ENCODE measurements at regions of chr10 and their contacts with region 1.

Region 1: GRCh38 chr10:45008524-45009161 is 7.9 kb downstream of the ZNF22 start:
- DNase-seq: peak; percentile 88
- ATAC-seq: peak; percentile 81
- H3K4me3 ChIP-seq: no peak overlapping the region
- H3K27ac ChIP-seq: no peak overlapping the region
- H3K4me1 ChIP-seq: peaks cover 44% of the 10 kb centered on the region
- H3K27me3 ChIP-seq: no peaks in the 10 kb centered on the region
- CTCF ChIP-seq: peak; percentile 87
- EP300 ChIP-seq: no peak
- POLR2A ChIP-seq: no peak
- RAD21 ChIP-seq: peak; percentile 83

Region 2: DNA sequence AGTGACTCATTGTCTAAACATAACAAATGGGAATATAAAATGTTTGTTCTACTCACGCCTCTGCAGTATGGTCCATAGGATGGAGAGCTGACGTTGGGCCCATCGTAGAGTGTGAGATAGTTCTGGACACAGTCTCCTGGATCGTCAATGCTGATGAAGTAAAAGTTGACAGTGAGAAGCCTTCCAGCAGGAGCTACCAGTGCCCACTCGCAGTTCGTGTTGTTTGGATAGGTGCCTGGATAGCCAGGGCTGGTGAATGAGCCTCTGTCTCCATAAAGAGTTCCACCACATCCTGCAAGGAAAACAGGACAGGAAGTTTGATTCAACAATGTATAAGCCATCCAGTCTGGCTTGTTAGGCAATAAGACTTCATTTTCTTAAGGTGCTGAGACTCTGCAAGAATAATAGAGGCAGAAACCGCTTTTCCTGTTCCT is 227.2 kb after region 1 on chr10:
- CTCF ChIA-PET with region 1: no interaction called
- POLR2A ChIA-PET with region 1: no interaction called
- in situ Hi-C with region 1: loop called (anchors 25 kb)
- intact Hi-C with region 1: loop called (anchors 2 kb)
- DNase-seq: no peak
- ATAC-seq: peak; percentile 63
- H3K4me3 ChIP-seq: no peak overlapping the region
- H3K27ac ChIP-seq: no peak overlapping the region
- H3K4me1 ChIP-seq: peaks cover 7% of the 10 kb centered on the region; the same call in 1 of the 2 replicates
- H3K27me3 ChIP-seq: peaks cover 0 to 15% of the 10 kb centered on the region in 2 experiments; a peak in 3 of 5 replicates
- CTCF ChIP-seq: no peak
- EP300 ChIP-seq: no peak
- POLR2A ChIP-seq: no peak
- RAD21 ChIP-seq: no peak

Region 3: DNA sequence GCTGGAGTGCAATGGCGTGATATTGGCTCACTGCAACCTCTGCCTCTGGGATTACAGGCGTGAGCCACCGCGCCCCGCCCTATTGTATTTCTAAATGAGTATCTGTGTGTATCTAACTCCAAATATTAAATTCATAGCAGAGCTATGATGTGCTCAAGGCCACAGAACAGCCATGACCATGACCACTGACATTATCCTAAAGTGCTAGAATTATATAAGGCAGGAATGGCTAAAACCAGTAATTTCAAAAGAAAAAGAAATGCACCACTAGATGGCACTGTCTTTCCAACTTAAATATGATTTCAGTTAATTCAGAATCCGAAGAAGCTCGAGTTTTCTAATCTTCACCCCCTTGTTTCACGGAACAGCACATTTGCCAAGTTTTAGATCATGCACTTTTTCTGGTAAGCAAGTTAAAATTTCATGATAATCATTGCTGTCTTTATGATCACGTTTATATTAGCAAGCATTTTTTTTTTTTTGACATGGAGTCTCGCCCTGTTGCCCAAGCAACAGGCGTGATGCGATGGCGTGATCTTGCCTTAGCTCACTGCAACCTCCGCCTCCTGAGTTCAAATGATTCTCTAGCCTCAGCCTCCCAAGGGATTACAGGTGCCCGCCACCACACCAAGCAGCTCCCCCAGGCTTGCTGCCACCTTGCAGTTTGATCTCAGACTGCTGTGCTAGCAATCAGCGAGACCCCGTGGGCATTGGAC is 241.5 kb after region 1 on chr10:
- CTCF ChIA-PET with region 1: no interaction called
- POLR2A ChIA-PET with region 1: no interaction called
- in situ Hi-C with region 1: loop called (anchors 25 kb)
- intact Hi-C with region 1: no loop called
- DNase-seq: peak; percentile 53
- ATAC-seq: peak; percentile 35; the same call in 2 of the 3 replicates
- H3K4me3 ChIP-seq: no peak overlapping the region
- H3K27ac ChIP-seq: no peak overlapping the region
- H3K4me1 ChIP-seq: peaks cover 8% of the 10 kb centered on the region; the same call in 1 of the 2 replicates
- H3K27me3 ChIP-seq: no peaks in the 10 kb centered on the region
- CTCF ChIP-seq: peak; percentile 62
- EP300 ChIP-seq: no peak
- POLR2A ChIP-seq: no peak
- RAD21 ChIP-seq: no peak

Region 4: DNA sequence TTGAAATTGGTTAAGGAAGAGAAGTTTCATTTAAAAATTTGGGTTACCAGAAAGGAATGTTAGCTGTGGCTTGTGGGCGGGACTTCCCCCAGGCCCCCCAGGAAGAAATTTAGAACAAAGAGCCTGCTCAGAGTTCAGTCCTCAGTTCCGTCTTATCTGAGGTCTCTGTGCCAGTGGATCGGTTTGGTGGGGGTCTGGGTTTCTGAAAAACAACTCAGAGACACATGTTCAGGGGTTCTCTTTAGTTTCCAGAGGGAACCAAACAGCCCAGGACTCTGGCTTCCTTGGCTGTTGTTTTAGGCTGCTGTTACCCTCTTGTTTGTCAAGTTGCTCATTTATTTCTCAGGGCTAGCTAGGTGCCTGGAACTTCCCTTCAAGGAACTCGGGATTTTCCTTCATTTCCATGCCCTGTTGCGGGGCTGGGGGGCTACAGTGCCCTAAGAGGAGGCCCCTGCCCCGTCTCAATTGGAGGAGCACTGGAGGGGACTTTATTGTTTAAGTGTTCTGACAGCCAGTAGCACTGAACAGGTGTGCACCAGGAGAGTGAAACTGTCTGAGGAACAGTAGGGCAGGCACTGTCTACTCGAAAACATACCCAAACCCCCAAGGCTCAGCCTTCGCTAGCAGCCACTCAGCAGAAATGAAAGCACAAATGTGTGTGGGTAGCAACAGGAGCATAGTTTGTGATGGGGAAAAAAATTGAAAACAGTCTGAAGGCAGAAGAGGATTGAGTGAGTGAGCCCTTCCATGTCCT is 425.2 kb after region 1 on chr10:
- CTCF ChIA-PET with region 1: no interaction called
- POLR2A ChIA-PET with region 1: no interaction called
- in situ Hi-C with region 1: loop called (anchors 25 kb)
- intact Hi-C with region 1: no loop called
- DNase-seq: no peak
- ATAC-seq: peak; percentile 41; the same call in 2 of the 3 replicates
- H3K4me3 ChIP-seq: no peak overlapping the region
- H3K27ac ChIP-seq: no peak overlapping the region
- H3K4me1 ChIP-seq: peaks cover 42% of the 10 kb centered on the region
- H3K27me3 ChIP-seq: peaks cover 0 to 26% of the 10 kb centered on the region in 2 experiments; a peak in 2 of 5 replicates
- CTCF ChIP-seq: no peak
- EP300 ChIP-seq: no peak
- POLR2A ChIP-seq: no peak
- RAD21 ChIP-seq: no peak

Region 5: GRCh38 chr10:45442662-45443061 is 434.0 kb after region 1 on chr10:
- CTCF ChIA-PET with region 1: no interaction called
- POLR2A ChIA-PET with region 1: no interaction called
- in situ Hi-C with region 1: loop called (anchors 25 kb)
- intact Hi-C with region 1: loop called (anchors 10 kb)
- DNase-seq: no peak
- ATAC-seq: peak; percentile 75
- H3K4me3 ChIP-seq: no peak overlapping the region
- H3K27ac ChIP-seq: no peak overlapping the region
- H3K4me1 ChIP-seq: peaks cover 13% of the 10 kb centered on the region
- H3K27me3 ChIP-seq: peaks cover 0 to 2% of the 10 kb centered on the region in 2 experiments; a peak in 1 of 5 replicates
- CTCF ChIP-seq: peak; percentile 61
- EP300 ChIP-seq: no peak
- POLR2A ChIP-seq: no peak
- RAD21 ChIP-seq: no peak